CD8-positive, alpha-beta memory T cell (primary cell): ENCODE measurements at regions of chr7 and their contacts with region 1.

Region 1: DNA sequence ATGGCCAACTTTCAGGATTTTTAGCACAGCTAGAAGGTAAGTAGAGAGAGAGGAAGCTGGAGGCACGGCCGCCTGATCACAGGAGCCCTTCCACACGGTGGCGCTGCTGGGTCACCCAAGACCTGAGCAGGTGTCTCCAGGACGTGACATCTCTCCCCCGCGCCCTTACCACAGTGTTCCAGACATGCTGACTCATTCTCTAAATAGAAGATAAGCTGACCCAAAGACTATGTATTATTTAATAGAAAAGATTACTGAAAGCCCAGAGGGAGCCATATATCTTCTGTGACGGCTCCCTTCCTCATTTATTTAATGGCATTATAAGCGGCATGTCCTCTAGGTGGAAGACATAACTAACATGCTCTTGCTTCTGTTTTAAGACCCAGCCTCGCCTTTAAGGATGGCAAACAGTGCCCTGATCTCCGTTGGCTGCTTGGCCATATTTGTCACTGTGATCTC is 26.0 kb upstream of the MALSU1 start:
- DNase-seq: peak; percentile 71 to 89 (median 77)
- H3K4me3 ChIP-seq: no peak overlapping the region
- H3K4me3 Mint-ChIP-seq: peak overlapping the region in 6 of 7 donors; percentile 49 to 75 (median 62)
- H3K27ac ChIP-seq: no peak overlapping the region
- H3K27ac Mint-ChIP-seq: peak overlapping the region in 2 of 8 donors; percentile 17 to 47
- H3K4me1 ChIP-seq: no peaks in the 10 kb centered on the region
- H3K4me1 Mint-ChIP-seq: peaks cover 7 to 13% (median 8%) of the 10 kb centered on the region in 3 donors
- H3K27me3 ChIP-seq: no peaks in the 10 kb centered on the region
- H3K27me3 Mint-ChIP-seq: peaks cover 5 to 6% of the 10 kb centered on the region in 2 donors

Region 2: GRCh38 chr7:23234569-23235296 is 38.4 kb before region 1 on chr7:
- CTCF ChIA-PET with region 1: no interaction called
- POLR2A ChIA-PET with region 1: no interaction called
- DNase-seq: no peak
- H3K4me3 ChIP-seq: no peak overlapping the region
- H3K4me3 Mint-ChIP-seq: peak overlapping the region; percentile 23 to 81 (median 69)
- H3K27ac ChIP-seq: no peak overlapping the region
- H3K27ac Mint-ChIP-seq: peak overlapping the region in 6 of 8 donors; percentile 15 to 86 (median 62)
- H3K4me1 ChIP-seq: no peaks in the 10 kb centered on the region
- H3K4me1 Mint-ChIP-seq: peaks cover 4 to 17% (median 11%) of the 10 kb centered on the region in 3 donors
- H3K27me3 ChIP-seq: no peaks in the 10 kb centered on the region
- H3K27me3 Mint-ChIP-seq: peaks cover 0 to 2% of the 10 kb centered on the region in 2 donors

Region 3: DNA sequence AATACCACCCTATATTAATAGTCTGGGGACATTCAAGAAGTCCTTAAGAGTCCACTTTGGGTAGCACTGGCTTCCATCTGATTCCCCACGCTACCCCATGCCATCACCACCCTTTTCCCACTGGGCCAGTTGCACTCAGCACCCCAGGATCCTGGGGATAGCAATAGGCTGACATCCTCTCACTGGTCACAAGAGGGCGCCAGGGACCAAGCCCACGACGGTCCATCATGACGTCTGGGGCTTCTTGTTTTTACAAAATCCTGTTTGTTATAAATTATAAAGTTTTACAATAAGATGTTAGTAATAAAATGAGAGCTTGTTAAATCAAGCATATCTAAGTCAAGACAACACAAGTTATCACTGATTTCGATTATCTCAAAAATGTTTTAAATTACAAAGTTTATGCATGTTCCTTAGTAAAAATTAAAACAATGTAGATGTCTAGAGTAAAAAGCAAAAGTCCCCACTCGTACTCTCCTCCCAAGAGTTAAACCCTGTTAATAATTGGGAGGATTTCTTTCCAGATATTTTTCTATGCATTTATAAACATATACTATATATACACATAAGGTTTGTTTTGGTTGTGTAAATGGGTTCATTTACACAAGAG is 11.2 kb before region 1 on chr7:
- CTCF ChIA-PET with region 1: interaction called, 74 read pairs
- POLR2A ChIA-PET with region 1: no interaction called
- DNase-seq: peak; percentile 28 to 60 (median 32)
- H3K4me3 ChIP-seq: no peak overlapping the region
- H3K4me3 Mint-ChIP-seq: no peak overlapping the region
- H3K27ac ChIP-seq: no peak overlapping the region
- H3K27ac Mint-ChIP-seq: no peak overlapping the region
- H3K4me1 ChIP-seq: no peaks in the 10 kb centered on the region
- H3K4me1 Mint-ChIP-seq: no peaks in the 10 kb centered on the region
- H3K27me3 ChIP-seq: peaks cover 3% of the 10 kb centered on the region
- H3K27me3 Mint-ChIP-seq: peaks cover 5 to 21% of the 10 kb centered on the region in 2 donors

Region 4: DNA sequence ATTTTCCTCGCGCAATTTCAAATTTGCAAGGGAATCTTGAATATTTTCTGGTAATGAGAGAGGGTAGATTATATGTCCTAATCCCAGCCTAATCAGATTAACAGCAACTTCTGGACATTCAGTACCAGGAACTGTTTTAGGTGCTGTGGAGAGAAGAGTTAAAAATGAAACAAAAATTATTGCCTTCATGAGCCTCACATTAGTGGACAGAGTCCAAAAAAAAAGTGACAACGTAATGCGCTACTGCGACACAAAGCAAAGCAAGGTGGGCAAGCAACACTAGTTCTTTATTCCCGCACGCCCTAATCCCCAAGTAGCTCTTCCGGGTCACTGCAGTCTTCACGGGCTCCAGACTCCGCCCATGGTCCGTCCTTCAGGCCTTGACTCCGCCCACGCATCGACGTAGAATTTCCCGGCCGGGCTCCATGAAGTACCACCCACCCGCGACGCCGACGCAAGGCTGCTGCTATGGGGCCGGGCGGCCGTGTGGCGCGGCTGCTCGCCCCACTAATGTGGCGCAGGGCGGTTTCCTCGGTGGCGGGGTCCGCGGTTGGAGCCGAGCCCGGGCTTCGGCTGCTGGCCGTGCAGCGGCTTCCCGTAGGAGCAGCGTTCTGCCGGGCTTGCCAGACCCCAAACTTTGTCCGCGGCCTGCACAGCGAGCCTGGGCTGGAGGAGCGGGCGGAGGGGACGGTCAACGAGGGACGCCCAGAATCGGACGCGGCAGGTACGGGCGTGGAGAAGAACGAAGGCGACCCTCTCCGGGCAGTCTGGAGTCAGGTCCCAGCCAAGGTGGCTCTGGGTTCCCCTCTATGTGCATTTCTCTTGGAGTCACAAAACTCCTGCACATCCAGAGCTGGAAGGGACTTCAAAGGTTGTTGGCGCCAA is 26.0 kb after region 1 on chr7 and contains the start of gene MALSU1:
- CTCF ChIA-PET with region 1: interaction called, 23 read pairs
- POLR2A ChIA-PET with region 1: no interaction called
- DNase-seq: peak; percentile 93 to 97 (median 94)
- H3K4me3 ChIP-seq: peak within 1 kb of the TSS; percentile 90
- H3K4me3 Mint-ChIP-seq: peak within 1 kb of the TSS; percentile 85 to 96 (median 94)
- H3K27ac ChIP-seq: peak within 1 kb of the TSS; percentile 88
- H3K27ac Mint-ChIP-seq: peak within 1 kb of the TSS; percentile 87 to 99 (median 98)
- H3K4me1 ChIP-seq: peaks cover 24% of the 10 kb centered on the region
- H3K4me1 Mint-ChIP-seq: peaks cover 39 to 57% (median 42%) of the 10 kb centered on the region in 3 donors
- H3K27me3 ChIP-seq: no peaks in the 10 kb centered on the region
- H3K27me3 Mint-ChIP-seq: peaks cover 1 to 3% of the 10 kb centered on the region in 2 donors
- total RNA-seq, gene MALSU1: 86.3 to 87.8 TPM

Region 5: GRCh38 chr7:23347682-23348180 is 74.6 kb after region 1 on chr7:
- CTCF ChIA-PET with region 1: interaction called, 21 read pairs
- POLR2A ChIA-PET with region 1: no interaction called
- DNase-seq: no peak
- H3K4me3 ChIP-seq: no peak overlapping the region
- H3K4me3 Mint-ChIP-seq: peak overlapping the region in 3 of 7 donors; percentile 65 to 77 (median 70)
- H3K27ac ChIP-seq: no peak overlapping the region
- H3K27ac Mint-ChIP-seq: peak overlapping the region in 1 of 8 donors; percentile 26
- H3K4me1 ChIP-seq: peaks cover 8% of the 10 kb centered on the region
- H3K4me1 Mint-ChIP-seq: peaks cover 14 to 20% (median 15%) of the 10 kb centered on the region in 3 donors
- H3K27me3 ChIP-seq: no peaks in the 10 kb centered on the region
- H3K27me3 Mint-ChIP-seq: peaks cover 0 to 3% of the 10 kb centered on the region in 2 donors

Region 6: GRCh38 chr7:23462846-23463245 is 189.7 kb after region 1 on chr7:
- CTCF ChIA-PET with region 1: interaction called, 21 read pairs
- POLR2A ChIA-PET with region 1: no interaction called
- DNase-seq: no peak
- H3K4me3 ChIP-seq: no peak overlapping the region
- H3K4me3 Mint-ChIP-seq: no peak overlapping the region
- H3K27ac ChIP-seq: no peak overlapping the region
- H3K27ac Mint-ChIP-seq: no peak overlapping the region
- H3K4me1 ChIP-seq: peaks cover 3% of the 10 kb centered on the region
- H3K4me1 Mint-ChIP-seq: peaks cover 5 to 9% (median 5%) of the 10 kb centered on the region in 3 donors
- H3K27me3 ChIP-seq: peaks cover 41% of the 10 kb centered on the region
- H3K27me3 Mint-ChIP-seq: peaks cover 35 to 84% of the 10 kb centered on the region in 2 donors

Region 7: DNA sequence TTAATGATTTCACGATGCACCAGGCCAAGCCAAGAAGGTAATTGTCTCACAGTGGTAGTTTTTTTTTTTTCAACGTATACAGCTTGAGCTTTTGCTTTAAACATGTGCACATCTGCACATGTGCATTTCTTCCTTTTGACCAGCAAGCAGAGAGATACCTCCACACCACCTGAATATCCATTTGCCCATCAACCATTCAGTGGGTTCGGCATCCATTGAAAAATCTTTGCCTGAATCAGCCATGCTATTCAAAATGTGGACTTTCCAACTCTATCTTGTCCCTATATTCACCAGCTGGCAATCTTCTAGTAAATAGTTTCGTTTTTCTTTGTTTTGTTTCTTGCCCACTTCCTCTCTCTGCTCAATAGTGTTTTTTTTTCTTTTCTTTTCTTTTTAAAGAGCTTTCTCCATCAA is 266.3 kb after region 1 on chr7:
- CTCF ChIA-PET with region 1: interaction called, 23 read pairs
- POLR2A ChIA-PET with region 1: no interaction called
- DNase-seq: peak in 2 of 5 donors; percentile 26 to 30
- H3K4me3 ChIP-seq: peak overlapping the region; percentile 37
- H3K4me3 Mint-ChIP-seq: peak overlapping the region; percentile 51 to 78 (median 68)
- H3K27ac ChIP-seq: peak overlapping the region; percentile 5
- H3K27ac Mint-ChIP-seq: peak overlapping the region; percentile 43 to 92 (median 84)
- H3K4me1 ChIP-seq: peaks cover 17% of the 10 kb centered on the region
- H3K4me1 Mint-ChIP-seq: peaks cover 14 to 17% (median 15%) of the 10 kb centered on the region in 3 donors
- H3K27me3 ChIP-seq: no peaks in the 10 kb centered on the region
- H3K27me3 Mint-ChIP-seq: no peaks in the 10 kb centered on the region